ENCODE measurements at regions of chr2 and their contacts with region 1.

Region 1: GRCh38 chr2:218257390-218257981 is 3.3 kb upstream of the GPBAR1 start:
- DNase-seq: peak; percentile 76
- ATAC-seq: peak; percentile 61
- H3K4me3 Mint-ChIP-seq: peak overlapping the region; percentile 50
- H3K27ac Mint-ChIP-seq: peak overlapping the region; percentile 88
- H3K4me1 Mint-ChIP-seq: peaks cover 22% of the 10 kb centered on the region
- H3K27me3 Mint-ChIP-seq: no peaks in the 10 kb centered on the region

Region 2: DNA sequence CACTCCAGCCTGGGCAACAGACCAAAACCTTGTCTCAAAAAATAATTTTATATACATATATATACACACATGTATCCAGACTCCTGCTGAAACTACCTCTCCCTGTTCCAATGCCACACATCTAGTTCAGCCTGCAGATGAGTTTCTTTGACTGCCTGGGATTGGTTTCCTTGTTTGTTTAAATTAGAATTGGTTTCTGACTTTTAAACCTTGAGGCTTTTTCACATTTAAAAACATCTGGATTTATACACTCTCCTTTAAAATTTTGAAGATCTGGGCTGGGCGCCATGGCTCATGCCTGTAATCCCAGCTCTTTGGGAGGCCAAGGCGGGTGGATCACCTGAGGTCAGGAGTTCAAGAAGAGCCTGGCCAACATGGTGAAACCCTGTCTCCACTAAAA is 69.0 kb before region 1 on chr2:
- CTCF ChIA-PET with region 1: interaction called, 10 read pairs
- POLR2A ChIA-PET with region 1: interaction called, 3 read pairs
- DNase-seq: no peak
- ATAC-seq: no peak
- H3K4me3 Mint-ChIP-seq: no peak overlapping the region
- H3K27ac Mint-ChIP-seq: no peak overlapping the region
- H3K4me1 Mint-ChIP-seq: peaks cover 12% of the 10 kb centered on the region
- H3K27me3 Mint-ChIP-seq: peaks cover 3% of the 10 kb centered on the region

Region 3: GRCh38 chr2:218216674-218217359 is 40.7 kb before region 1 on chr2 and contains the start of gene ARPC2:
- CTCF ChIA-PET with region 1: interaction called, 16 read pairs
- POLR2A ChIA-PET with region 1: interaction called, 4 read pairs
- DNase-seq: peak; percentile 97
- ATAC-seq: peak; percentile 72
- H3K4me3 Mint-ChIP-seq: peak within 1 kb of the TSS; percentile 94
- H3K27ac Mint-ChIP-seq: peak within 1 kb of the TSS; percentile 93
- H3K4me1 Mint-ChIP-seq: peaks cover 36% of the 10 kb centered on the region
- H3K27me3 Mint-ChIP-seq: no peaks in the 10 kb centered on the region
- total RNA-seq, gene ARPC2: 821 to 844 TPM

Region 4: GRCh38 chr2:218229239-218229638 is 28.2 kb before region 1 on chr2:
- CTCF ChIA-PET with region 1: interaction called, 43 read pairs
- POLR2A ChIA-PET with region 1: interaction called, 6 read pairs
- DNase-seq: peak; percentile 77
- ATAC-seq: peak; percentile 83
- H3K4me3 Mint-ChIP-seq: peak overlapping the region; percentile 58
- H3K27ac Mint-ChIP-seq: peak overlapping the region; percentile 88
- H3K4me1 Mint-ChIP-seq: peaks cover 80% of the 10 kb centered on the region
- H3K27me3 Mint-ChIP-seq: no peaks in the 10 kb centered on the region

Region 5: GRCh38 chr2:218245214-218245613 is 12.3 kb before region 1 on chr2:
- CTCF ChIA-PET with region 1: interaction called, 31 read pairs
- POLR2A ChIA-PET with region 1: interaction called, 7 read pairs
- DNase-seq: no peak
- ATAC-seq: no peak
- H3K4me3 Mint-ChIP-seq: no peak overlapping the region
- H3K27ac Mint-ChIP-seq: peak overlapping the region; percentile 25
- H3K4me1 Mint-ChIP-seq: peaks cover 41% of the 10 kb centered on the region
- H3K27me3 Mint-ChIP-seq: no peaks in the 10 kb centered on the region